ENCODE measurements at regions of chr6 and their contacts with region 1.

Region 1: DNA sequence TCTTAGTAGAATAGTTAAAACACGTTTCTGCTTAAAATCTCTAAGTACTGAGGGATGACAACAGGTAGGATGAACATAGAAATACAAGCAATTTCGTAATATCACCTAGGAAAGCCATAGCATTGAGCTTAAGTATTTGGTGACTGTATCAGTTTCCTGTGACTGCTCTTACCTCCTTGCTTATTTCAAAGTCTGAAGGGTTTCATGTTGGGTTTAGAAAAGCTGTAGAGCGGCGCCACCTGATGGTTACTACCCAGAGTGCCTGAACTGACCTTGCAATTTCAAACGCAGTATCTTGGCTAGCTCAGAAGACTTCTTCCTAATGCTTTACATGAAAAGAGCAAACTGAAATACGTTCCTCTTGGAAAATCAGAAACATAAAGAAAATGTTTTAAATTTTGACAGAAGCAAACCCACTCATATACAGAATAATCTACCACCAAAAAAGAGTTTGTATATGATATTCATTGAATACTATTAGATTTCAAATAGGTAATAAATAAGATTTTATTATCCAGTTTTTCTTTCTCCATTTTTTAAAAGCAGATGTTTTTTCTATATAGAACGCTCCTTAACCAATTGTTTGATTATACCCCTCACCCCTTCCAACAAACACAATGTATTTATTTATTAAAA is 82.3 kb upstream of the RIPOR2 start:
- DNase-seq: peak; percentile 66
- H3K4me3 ChIP-seq: no peak overlapping the region
- H3K27ac ChIP-seq: no peak overlapping the region
- H3K4me1 ChIP-seq: no peaks in the 10 kb centered on the region
- H3K27me3 ChIP-seq: no peaks in the 10 kb centered on the region
- CTCF ChIP-seq: peak; percentile 39 to 40
- POLR2A ChIP-seq: no peak

Region 2: GRCh38 chr6:24774696-24775519 is 243.1 kb before region 1 on chr6 and contains the start of gene GMNN:
- CTCF ChIA-PET with region 1: no interaction called
- POLR2A ChIA-PET with region 1: no interaction called
- dilution Hi-C with region 1: no loop called
- intact Hi-C with region 1: loop called (anchors 5 kb)
- DNase-seq: peak; percentile 94
- H3K4me3 ChIP-seq: peak within 1 kb of the TSS; percentile 41 to 99 (median 82)
- H3K27ac ChIP-seq: peak within 1 kb of the TSS; percentile 54
- H3K4me1 ChIP-seq: peaks cover 23% of the 10 kb centered on the region
- H3K27me3 ChIP-seq: no peaks in the 10 kb centered on the region
- CTCF ChIP-seq: no peak
- POLR2A ChIP-seq: peak; percentile 85
- total RNA-seq, gene GMNN: 51.9 and 52.6 TPM in 2 replicates

Region 3: GRCh38 chr6:24933868-24934401 is 84.1 kb before region 1 on chr6:
- CTCF ChIA-PET with region 1: interaction called, 29 read pairs
- POLR2A ChIA-PET with region 1: no interaction called
- dilution Hi-C with region 1: no loop called
- intact Hi-C with region 1: loop called (anchors 5 kb)
- DNase-seq: peak; percentile 22
- H3K4me3 ChIP-seq: no peak overlapping the region
- H3K27ac ChIP-seq: no peak overlapping the region
- H3K4me1 ChIP-seq: no peaks in the 10 kb centered on the region
- H3K27me3 ChIP-seq: peaks cover 0 to 3% of the 10 kb centered on the region in 2 experiments
- CTCF ChIP-seq: peak; percentile 40 to 57
- POLR2A ChIP-seq: no peak

Region 4: GRCh38 chr6:25006565-25007001 is 11.5 kb before region 1 on chr6:
- CTCF ChIA-PET with region 1: interaction called, 11 read pairs
- POLR2A ChIA-PET with region 1: no interaction called
- dilution Hi-C with region 1: no loop called
- intact Hi-C with region 1: no loop called
- DNase-seq: peak; percentile 68
- H3K4me3 ChIP-seq: no peak overlapping the region
- H3K27ac ChIP-seq: peak overlapping the region; percentile 19
- H3K4me1 ChIP-seq: peaks cover 33% of the 10 kb centered on the region
- H3K27me3 ChIP-seq: no peaks in the 10 kb centered on the region
- CTCF ChIP-seq: no peak
- POLR2A ChIP-seq: no peak

Region 5: DNA sequence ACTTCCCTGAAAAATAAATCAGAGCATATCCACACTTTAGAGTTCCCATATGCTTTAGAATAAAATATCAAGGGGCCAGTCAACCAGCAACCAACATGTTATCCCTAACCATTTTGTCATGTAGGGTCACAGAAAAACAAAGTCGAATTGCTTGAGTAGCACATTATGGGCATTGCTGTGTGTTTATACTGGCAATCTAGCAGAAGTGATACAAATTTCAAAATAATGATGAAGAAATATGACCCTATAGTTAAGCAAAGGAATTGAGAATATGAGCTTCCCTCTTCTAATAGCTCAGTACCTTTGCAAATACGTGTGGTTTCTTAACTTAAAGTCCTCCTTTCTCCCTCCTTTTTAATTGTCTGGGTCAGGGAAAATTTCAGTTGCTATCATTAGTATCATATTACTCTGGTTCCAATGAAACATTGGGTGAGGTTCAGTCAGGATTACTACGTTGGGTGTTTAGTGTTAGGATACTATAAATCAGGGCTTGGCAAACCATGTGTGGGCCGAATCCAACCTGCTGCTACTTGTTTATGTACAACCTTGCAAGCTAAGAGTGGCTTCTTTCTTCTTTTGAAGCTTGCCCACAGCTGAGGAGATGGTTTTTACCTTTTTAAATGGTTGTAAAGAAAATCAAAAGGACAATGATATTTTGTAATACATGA is 94.3 kb after region 1 on chr6:
- CTCF ChIA-PET with region 1: no interaction called
- POLR2A ChIA-PET with region 1: no interaction called
- dilution Hi-C with region 1: no loop called
- intact Hi-C with region 1: no loop called
- DNase-seq: no peak
- H3K4me3 ChIP-seq: no peak overlapping the region
- H3K27ac ChIP-seq: no peak overlapping the region
- H3K4me1 ChIP-seq: peaks cover 3% of the 10 kb centered on the region
- H3K27me3 ChIP-seq: no peaks in the 10 kb centered on the region
- CTCF ChIP-seq: no peak
- POLR2A ChIP-seq: no peak

Region 6: GRCh38 chr6:25193460-25194171 is 175.6 kb after region 1 on chr6:
- CTCF ChIA-PET with region 1: no interaction called
- POLR2A ChIA-PET with region 1: no interaction called
- dilution Hi-C with region 1: no loop called
- intact Hi-C with region 1: loop called (anchors 10 kb)
- DNase-seq: peak; percentile 96
- H3K4me3 ChIP-seq: peak overlapping the region in 1 of 3 experiments; percentile 45
- H3K27ac ChIP-seq: peak overlapping the region; percentile 93
- H3K4me1 ChIP-seq: peaks cover 22% of the 10 kb centered on the region
- H3K27me3 ChIP-seq: no peaks in the 10 kb centered on the region
- CTCF ChIP-seq: no peak
- POLR2A ChIP-seq: peak; percentile 35

Measured in endothelial cell of umbilical vein (primary cell).